ENCODE measurements at regions of chr17 and their contacts with region 1.

Region 1: GRCh38 chr17:75594499-75595276 is 7.1 kb downstream of the MYO15B start:
- DNase-seq: no peak
- H3K4me3 ChIP-seq: no peak overlapping the region
- CTCF ChIP-seq: no peak

Region 2: GRCh38 chr17:75504347-75504964 is 90.2 kb before region 1 on chr17:
- in situ Hi-C with region 1: no loop called
- DNase-seq: no peak
- H3K4me3 ChIP-seq: no peak overlapping the region
- CTCF ChIP-seq: peak; percentile 62

Region 3: GRCh38 chr17:75539967-75540711 is 54.5 kb before region 1 on chr17:
- in situ Hi-C with region 1: loop called (anchors 5 kb)
- DNase-seq: no peak
- H3K4me3 ChIP-seq: no peak overlapping the region
- CTCF ChIP-seq: no peak

Region 4: GRCh38 chr17:75679706-75680442 is 85.2 kb after region 1 on chr17:
- in situ Hi-C with region 1: no loop called
- DNase-seq: no peak
- H3K4me3 ChIP-seq: no peak overlapping the region
- CTCF ChIP-seq: peak; percentile 36